ENCODE measurements at regions of chr10 and their contacts with region 1.

Region 1: GRCh38 chr10:4813023-4813422 is 13.0 kb upstream of the AKR1E2 start:
- DNase-seq: no peak
- H3K4me3 ChIP-seq: no peak overlapping the region
- H3K4me3 Mint-ChIP-seq: no peak overlapping the region
- H3K27ac ChIP-seq: no peak overlapping the region
- H3K27ac Mint-ChIP-seq: no peak overlapping the region
- H3K4me1 ChIP-seq: peaks cover 6% of the 10 kb centered on the region
- H3K4me1 Mint-ChIP-seq: no peaks in the 10 kb centered on the region
- H3K27me3 ChIP-seq: no peaks in the 10 kb centered on the region
- H3K27me3 Mint-ChIP-seq: peaks cover 11 to 13% of the 10 kb centered on the region in 2 donors

Region 2: GRCh38 chr10:4825851-4826665 is 13.0 kb after region 1 on chr10 and contains the start of gene AKR1E2:
- CTCF ChIA-PET with region 1: interaction called, 33 read pairs
- POLR2A ChIA-PET with region 1: no interaction called
- intact Hi-C with region 1: no loop called
- DNase-seq: peak; percentile 80 to 88 (median 87)
- H3K4me3 ChIP-seq: peak within 1 kb of the TSS in 1 of 2 donors; percentile 36
- H3K4me3 Mint-ChIP-seq: peak within 1 kb of the TSS; percentile 71 to 86 (median 83)
- H3K27ac ChIP-seq: peak within 1 kb of the TSS; percentile 32
- H3K27ac Mint-ChIP-seq: peak within 1 kb of the TSS; percentile 65 to 95 (median 89)
- H3K4me1 ChIP-seq: no peaks in the 10 kb centered on the region
- H3K4me1 Mint-ChIP-seq: peaks cover 7 to 25% (median 10%) of the 10 kb centered on the region in 4 donors
- H3K27me3 ChIP-seq: no peaks in the 10 kb centered on the region
- H3K27me3 Mint-ChIP-seq: peaks cover 9 to 20% of the 10 kb centered on the region in 2 donors
- total RNA-seq, gene AKR1E2: 9.2 to 9.8 TPM

Region 3: DNA sequence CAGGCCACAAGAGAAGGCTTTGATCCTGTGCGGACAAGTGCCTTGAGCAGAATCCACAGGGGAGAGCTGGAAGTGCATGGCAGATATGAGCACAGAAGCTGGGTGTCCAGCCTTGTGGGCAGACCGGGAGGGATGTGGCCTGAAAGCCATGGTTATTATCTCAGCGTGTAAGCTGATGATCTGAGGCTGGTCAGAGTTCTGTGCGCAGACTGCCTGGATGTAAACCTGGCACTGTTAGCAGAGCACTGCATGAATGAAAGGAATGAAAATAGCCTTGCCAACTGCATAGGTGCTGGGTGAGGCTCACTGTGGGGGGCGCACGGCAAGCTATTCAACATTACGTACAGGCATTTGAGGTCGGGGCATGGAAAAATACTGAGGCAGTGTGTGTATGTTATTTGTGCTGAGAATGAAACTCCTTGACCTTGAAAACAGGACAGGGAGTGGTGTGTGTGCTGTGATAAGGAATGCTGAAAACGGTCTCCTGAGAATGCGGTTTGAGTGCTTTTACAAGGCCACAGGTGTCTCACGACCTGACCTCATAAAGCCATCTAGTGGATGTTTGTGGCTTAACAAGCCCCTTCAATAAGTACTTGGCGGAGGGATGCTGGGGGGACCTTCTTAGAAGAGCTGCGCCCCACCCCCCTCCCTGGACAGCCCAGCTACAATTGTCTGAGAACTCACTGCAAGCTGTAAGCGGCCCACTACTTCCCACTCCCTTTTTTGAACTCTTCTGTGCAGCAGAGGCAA is 168.9 kb after region 1 on chr10:
- CTCF ChIA-PET with region 1: no interaction called
- POLR2A ChIA-PET with region 1: no interaction called
- intact Hi-C with region 1: loop called (anchors 2 kb)
- DNase-seq: peak in 2 of 5 donors; percentile 1 to 5
- H3K4me3 ChIP-seq: no peak overlapping the region
- H3K4me3 Mint-ChIP-seq: no peak overlapping the region
- H3K27ac ChIP-seq: no peak overlapping the region
- H3K27ac Mint-ChIP-seq: peak overlapping the region in 1 of 7 donors; percentile 19
- H3K4me1 ChIP-seq: no peaks in the 10 kb centered on the region
- H3K4me1 Mint-ChIP-seq: peaks cover 0 to 2% (median 0%) of the 10 kb centered on the region in 4 donors
- H3K27me3 ChIP-seq: no peaks in the 10 kb centered on the region
- H3K27me3 Mint-ChIP-seq: peaks cover 2 to 15% of the 10 kb centered on the region in 2 donors

Region 4: GRCh38 chr10:5418584-5418983 is 605.6 kb after region 1 on chr10:
- CTCF ChIA-PET with region 1: no interaction called
- POLR2A ChIA-PET with region 1: no interaction called
- intact Hi-C with region 1: no loop called
- DNase-seq: no peak
- H3K4me3 ChIP-seq: no peak overlapping the region
- H3K4me3 Mint-ChIP-seq: peak overlapping the region in 1 of 8 donors; percentile 26
- H3K27ac ChIP-seq: no peak overlapping the region
- H3K27ac Mint-ChIP-seq: no peak overlapping the region
- H3K4me1 ChIP-seq: no peaks in the 10 kb centered on the region
- H3K4me1 Mint-ChIP-seq: no peaks in the 10 kb centered on the region
- H3K27me3 ChIP-seq: no peaks in the 10 kb centered on the region
- H3K27me3 Mint-ChIP-seq: no peaks in the 10 kb centered on the region

Measured in CD4-positive, alpha-beta memory T cell (primary cell).